Activated CD8-positive, alpha-beta memory T cell treated with anti-CD3 and anti-CD28 coated beads, Interleukin-2, amount 10 ng/mL, durations not matched to agents 7 days and 5 days (primary cell): ENCODE measurements at regions of chr20 and their contacts with region 1.

Region 1: DNA sequence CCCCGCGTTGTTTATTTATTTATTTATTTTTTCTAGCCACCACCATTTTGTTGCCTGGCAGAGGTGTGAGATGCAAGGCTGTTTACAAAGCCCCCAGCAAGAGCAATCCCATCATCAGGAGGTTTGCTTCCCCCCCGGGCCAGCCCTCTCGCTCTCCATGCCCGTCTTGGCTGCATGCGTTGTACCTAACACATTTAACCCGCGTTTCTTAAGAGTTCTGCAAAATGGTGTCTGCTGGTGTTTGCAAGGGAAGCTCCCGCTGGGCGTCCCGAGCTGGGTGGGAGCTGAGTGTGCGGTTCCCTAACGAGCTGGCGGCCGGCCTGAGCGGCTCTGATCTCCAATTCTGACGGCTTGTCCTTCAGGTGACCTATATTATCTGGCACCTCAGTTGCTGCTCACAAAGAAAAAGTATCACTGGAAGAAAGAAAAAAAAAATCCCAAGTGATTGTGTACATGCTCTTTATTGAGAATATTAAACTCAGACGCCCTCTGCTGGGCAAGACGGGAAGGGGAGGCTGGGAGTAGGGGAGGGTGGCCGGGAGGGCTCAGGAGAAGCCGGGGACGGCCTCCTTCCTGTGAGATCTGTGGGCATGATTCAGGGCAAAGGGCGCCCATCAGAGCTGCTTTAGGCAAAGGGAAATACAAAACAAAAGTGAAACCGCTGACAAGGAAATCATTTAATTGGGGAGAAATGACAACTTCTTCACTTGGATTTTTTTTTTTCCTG is 154.8 kb downstream of the BCAS1 start:
- DNase-seq: peak; percentile 98
- ATAC-seq: peak; percentile 98
- H3K4me3 Mint-ChIP-seq: peak overlapping the region; percentile 94
- H3K27ac Mint-ChIP-seq: peak overlapping the region; percentile 92
- H3K4me1 Mint-ChIP-seq: peaks cover 40% of the 10 kb centered on the region
- H3K27me3 Mint-ChIP-seq: no peaks in the 10 kb centered on the region

Region 2: DNA sequence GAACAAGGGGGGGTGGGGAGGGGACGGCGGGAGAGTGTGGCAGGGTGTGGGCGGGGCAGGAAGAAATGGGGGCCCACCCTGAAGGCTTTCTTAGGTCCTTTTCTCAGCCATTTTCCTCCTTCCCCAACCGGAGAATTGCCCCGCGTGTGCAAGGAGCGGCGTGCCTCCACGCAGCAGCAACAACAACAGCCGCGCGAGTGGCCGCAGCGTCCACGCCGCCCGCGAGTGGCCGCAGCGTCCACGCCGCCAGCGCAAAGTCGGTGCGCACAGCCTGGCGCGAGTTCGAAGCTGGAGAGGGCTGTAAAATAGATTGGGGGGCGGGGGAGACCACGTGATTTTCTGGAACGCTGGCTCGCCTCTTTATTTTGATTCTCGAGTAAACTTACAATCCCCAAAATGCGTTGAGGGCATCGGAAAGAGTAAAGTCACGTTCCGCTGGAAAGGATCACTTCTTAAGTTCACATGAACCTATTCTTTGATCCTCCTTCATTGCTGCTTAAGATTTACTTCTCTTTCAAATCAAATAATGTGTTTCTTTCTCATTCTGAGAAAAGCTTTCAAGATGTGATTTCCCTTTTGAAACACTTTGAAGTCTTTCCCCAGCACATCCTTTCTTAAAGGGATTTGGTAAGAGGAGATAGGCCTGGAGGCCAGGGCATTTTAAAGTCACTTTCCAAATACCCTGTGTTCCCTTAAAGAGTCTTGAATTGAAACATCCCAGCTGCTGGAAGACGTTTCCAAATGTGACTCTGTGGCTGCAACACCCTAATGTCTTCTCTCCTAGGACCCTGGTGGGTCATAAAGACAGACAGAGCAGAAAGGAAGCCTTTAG is 255.3 kb before region 1 on chr20:
- CTCF ChIA-PET with region 1: interaction called, 14 read pairs
- DNase-seq: peak; percentile 68
- ATAC-seq: peak; percentile 48
- H3K4me3 Mint-ChIP-seq: peak overlapping the region; percentile 82
- H3K27ac Mint-ChIP-seq: peak overlapping the region; percentile 94
- H3K4me1 Mint-ChIP-seq: peaks cover 53% of the 10 kb centered on the region
- H3K27me3 Mint-ChIP-seq: no peaks in the 10 kb centered on the region

Region 3: GRCh38 chr20:53750827-53751619 is 164.6 kb before region 1 on chr20:
- CTCF ChIA-PET with region 1: interaction called, 13 read pairs
- DNase-seq: peak; percentile 82
- ATAC-seq: peak; percentile 77
- H3K4me3 Mint-ChIP-seq: peak overlapping the region; percentile 42
- H3K27ac Mint-ChIP-seq: peak overlapping the region; percentile 95
- H3K4me1 Mint-ChIP-seq: peaks cover 74% of the 10 kb centered on the region
- H3K27me3 Mint-ChIP-seq: no peaks in the 10 kb centered on the region

Region 4: GRCh38 chr20:53869466-53870258 is 45.9 kb before region 1 on chr20:
- CTCF ChIA-PET with region 1: interaction called, 35 read pairs
- DNase-seq: peak; percentile 86
- ATAC-seq: peak; percentile 76
- H3K4me3 Mint-ChIP-seq: peak overlapping the region; percentile 18
- H3K27ac Mint-ChIP-seq: peak overlapping the region; percentile 90
- H3K4me1 Mint-ChIP-seq: peaks cover 74% of the 10 kb centered on the region
- H3K27me3 Mint-ChIP-seq: no peaks in the 10 kb centered on the region

Region 5: DNA sequence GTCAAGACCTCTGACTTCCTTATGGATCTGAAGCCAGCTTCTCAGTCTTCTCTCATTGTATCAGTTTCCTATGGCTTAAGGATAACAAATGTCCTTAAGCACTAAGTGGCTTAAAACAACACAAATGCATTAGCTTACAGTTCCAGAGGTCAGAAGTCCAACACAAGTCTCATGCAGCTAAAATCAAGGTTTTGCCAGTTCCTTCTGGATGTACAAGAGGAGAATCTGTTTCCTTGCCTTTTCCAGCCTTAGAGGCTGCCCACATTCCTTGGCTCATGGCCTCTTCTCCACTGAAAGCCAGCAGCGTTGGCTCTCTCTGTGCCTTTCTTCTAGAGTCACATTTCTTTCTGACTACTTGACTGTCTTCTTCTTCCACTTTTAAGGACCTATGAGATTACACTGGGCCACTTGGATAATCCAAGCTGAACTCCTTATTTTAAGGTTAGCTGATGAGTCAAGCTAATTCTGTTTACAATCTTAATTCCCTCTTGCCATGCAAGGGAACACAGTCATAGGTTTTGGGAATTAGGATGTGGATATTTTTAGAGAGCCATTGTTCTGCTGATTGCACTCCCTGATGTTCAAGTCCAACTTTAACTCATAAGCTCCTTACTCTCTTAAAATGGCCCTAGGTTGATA is 24.2 kb before region 1 on chr20:
- CTCF ChIA-PET with region 1: interaction called, 14 read pairs
- DNase-seq: no peak
- ATAC-seq: no peak
- H3K4me3 Mint-ChIP-seq: no peak overlapping the region
- H3K27ac Mint-ChIP-seq: peak overlapping the region; percentile 39
- H3K4me1 Mint-ChIP-seq: peaks cover 52% of the 10 kb centered on the region
- H3K27me3 Mint-ChIP-seq: no peaks in the 10 kb centered on the region

Region 6: DNA sequence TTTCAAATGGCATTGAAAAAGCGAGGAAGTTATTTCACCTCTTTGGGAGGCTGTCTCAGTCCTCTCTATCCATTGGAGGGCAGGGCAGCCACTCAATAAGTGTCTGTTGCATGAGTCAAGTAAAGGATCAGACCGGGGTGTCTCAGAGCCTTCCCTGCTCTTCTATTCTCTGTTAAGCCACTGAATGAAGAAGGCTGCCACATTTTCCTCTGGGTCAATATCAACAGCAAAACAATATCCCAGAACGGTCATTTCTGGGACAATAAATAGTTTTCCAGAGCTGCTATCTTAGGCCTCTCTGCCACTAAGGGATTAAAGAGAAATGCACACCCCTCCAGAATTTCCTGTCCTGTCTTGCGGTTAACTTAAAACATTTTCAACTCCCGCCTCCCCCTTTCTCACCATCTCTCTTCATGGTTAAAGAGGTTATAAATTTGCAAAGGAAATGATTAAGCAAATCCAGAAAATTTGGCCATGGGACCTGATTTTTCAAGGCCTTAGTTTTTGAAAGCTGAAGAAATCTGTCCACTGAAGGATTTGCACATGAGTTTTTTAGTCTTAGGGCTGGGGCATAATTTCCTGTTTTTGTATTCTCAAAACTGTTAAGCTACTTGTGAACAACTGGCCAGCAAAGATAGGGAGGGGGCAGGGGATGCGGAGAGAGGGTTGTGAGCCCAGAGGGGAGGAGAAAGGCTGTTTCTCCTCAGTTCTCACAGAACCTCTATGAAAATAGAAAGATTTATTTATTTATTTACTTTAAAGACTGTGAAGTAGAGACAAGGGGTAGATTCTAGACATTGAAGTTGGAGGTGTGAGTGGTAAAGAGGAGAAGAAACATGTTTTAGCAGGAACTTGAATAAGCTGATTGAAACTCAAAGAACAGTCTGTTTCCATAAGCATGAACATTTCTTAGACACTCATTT is 19.1 kb after region 1 on chr20:
- CTCF ChIA-PET with region 1: interaction called, 36 read pairs
- DNase-seq: no peak
- ATAC-seq: peak; percentile 58
- H3K4me3 Mint-ChIP-seq: peak overlapping the region; percentile 27
- H3K27ac Mint-ChIP-seq: peak overlapping the region; percentile 81
- H3K4me1 Mint-ChIP-seq: peaks cover 50% of the 10 kb centered on the region
- H3K27me3 Mint-ChIP-seq: no peaks in the 10 kb centered on the region

Region 7: DNA sequence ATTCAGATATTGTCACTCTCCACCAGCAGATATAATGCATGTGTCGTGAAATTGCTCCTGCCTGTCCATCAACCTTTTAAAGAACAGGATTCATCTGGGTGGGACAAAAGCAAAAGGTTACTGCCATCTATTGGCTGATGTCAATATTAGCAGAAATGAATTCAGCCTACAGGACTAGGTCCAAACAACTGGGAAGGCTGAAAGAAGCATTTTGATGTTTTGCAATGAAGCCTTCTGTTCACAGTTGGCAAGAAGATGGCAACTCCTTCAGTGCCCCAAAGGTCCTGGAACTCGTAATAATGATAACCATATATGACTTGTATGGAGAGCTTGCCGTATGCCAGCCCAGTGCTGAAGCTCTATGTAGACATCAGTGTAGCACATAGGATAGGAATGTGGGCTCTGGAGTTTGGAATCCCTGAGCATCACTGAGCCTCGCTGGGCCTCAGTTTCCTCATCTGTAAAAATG is 147.2 kb after region 1 on chr20:
- CTCF ChIA-PET with region 1: interaction called, 12 read pairs
- DNase-seq: no peak
- ATAC-seq: peak; percentile 59
- H3K4me3 Mint-ChIP-seq: no peak overlapping the region
- H3K27ac Mint-ChIP-seq: no peak overlapping the region
- H3K4me1 Mint-ChIP-seq: peaks cover 42% of the 10 kb centered on the region
- H3K27me3 Mint-ChIP-seq: no peaks in the 10 kb centered on the region